H1 (cell line): ENCODE measurements at regions of chr5 and their contacts with region 1.

Region 1: GRCh38 chr5:149367249-149367971 is 9.6 kb downstream of the PCYOX1L start:
- DNase-seq: peak; percentile 62 to 89
- H3K4me3 ChIP-seq: no peak overlapping the region
- H3K27ac ChIP-seq: no peak overlapping the region
- H3K4me1 ChIP-seq: peaks cover 0 to 3% (median 1%) of the 10 kb centered on the region in 4 experiments; a peak in 3 of 7 replicates
- H3K27me3 ChIP-seq: no peaks in the 10 kb centered on the region
- CTCF ChIP-seq: peak; percentile 68 to 98 (median 97)
- EP300 ChIP-seq: no peak
- POLR2A ChIP-seq: no peak
- RAD21 ChIP-seq: peak; percentile 84 to 85

Region 2: DNA sequence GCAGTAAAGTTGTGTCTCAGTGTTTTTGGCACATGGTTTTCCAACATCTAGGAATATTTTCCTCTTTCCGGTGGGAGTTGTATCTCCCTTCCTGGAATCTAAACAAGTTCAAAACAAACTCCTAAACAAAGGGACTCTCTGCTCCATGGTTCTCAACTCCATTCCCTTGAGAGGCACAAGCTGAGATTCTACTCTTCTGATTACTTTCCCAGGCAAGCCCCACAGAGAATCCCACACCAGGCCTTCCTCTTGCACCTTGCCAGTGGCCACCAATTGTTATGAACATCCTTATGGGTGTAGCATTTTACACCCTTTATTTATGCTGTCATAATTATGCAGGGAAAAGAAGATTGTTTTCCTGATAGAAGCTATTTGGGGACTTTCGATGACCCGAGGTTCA is 278.7 kb before region 1 on chr5:
- CTCF ChIA-PET with region 1: no interaction called
- POLR2A ChIA-PET with region 1: no interaction called
- DNase-seq: no peak
- H3K4me3 ChIP-seq: no peak overlapping the region
- H3K27ac ChIP-seq: no peak overlapping the region
- H3K4me1 ChIP-seq: no peaks in the 10 kb centered on the region
- H3K27me3 ChIP-seq: no peaks in the 10 kb centered on the region
- CTCF ChIP-seq: no peak
- EP300 ChIP-seq: no peak
- POLR2A ChIP-seq: no peak
- RAD21 ChIP-seq: no peak

Region 3: GRCh38 chr5:149108651-149109280 is 258.6 kb before region 1 on chr5:
- CTCF ChIA-PET with region 1: no interaction called
- POLR2A ChIA-PET with region 1: no interaction called
- DNase-seq: no peak
- H3K4me3 ChIP-seq: no peak overlapping the region
- H3K27ac ChIP-seq: no peak overlapping the region
- H3K4me1 ChIP-seq: no peaks in the 10 kb centered on the region
- H3K27me3 ChIP-seq: no peaks in the 10 kb centered on the region
- CTCF ChIP-seq: no peak
- EP300 ChIP-seq: no peak
- POLR2A ChIP-seq: no peak
- RAD21 ChIP-seq: no peak

Region 4: DNA sequence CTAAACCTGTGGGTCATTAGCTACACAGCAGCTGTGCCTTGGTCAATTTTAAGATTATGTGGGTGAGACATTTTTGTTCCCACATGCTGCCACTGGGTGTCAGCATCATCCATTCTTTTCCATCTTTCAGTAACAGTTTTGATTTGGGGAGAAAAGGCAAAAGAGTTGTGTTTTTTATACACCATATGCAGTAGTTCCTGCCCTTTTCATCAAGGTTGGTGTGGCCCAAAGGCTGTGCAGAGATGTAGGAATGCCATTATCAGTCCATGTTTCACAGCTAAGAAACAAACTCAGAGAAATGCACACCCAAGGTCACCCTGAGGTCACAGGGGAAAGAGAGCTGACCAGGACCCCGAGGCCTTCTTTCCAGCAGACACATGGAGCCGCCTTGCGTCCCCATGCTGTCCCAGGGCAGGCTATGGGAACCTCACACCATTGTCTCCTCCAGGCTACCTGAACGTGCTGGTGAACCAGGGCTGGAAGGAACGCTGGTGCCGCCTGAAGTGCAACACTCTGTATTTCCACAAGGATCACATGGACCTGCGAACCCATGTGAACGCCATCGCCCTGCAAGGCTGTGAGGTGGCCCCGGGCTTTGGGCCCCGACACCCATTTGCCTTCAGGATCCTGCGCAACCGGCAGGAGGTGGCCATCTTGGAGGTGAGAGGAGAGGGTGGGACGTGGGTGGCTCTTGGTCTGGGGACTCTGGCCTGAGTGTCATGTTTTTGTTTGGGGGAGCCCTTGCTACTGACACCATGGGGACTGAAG is 49.9 kb before region 1 on chr5:
- CTCF ChIA-PET with region 1: interaction called, 43 read pairs
- POLR2A ChIA-PET with region 1: no interaction called
- DNase-seq: no peak
- H3K4me3 ChIP-seq: no peak overlapping the region
- H3K27ac ChIP-seq: no peak overlapping the region; the same call in 1 of the 2 replicates
- H3K4me1 ChIP-seq: peaks cover 0 to 4% (median 1%) of the 10 kb centered on the region in 4 experiments; a peak in 4 of 7 replicates
- H3K27me3 ChIP-seq: no peaks in the 10 kb centered on the region
- CTCF ChIP-seq: peak in 2 of 3 experiments; percentile 63 to 67; a peak in 3 of 4 replicates
- EP300 ChIP-seq: no peak
- POLR2A ChIP-seq: no peak
- RAD21 ChIP-seq: peak; percentile 68 to 75

Region 5: GRCh38 chr5:149345147-149345875 is 22.1 kb before region 1 on chr5 and contains the start of gene GRPEL2:
- CTCF ChIA-PET with region 1: interaction called, 26 read pairs
- POLR2A ChIA-PET with region 1: interaction called, 10 read pairs
- DNase-seq: peak; percentile 86 to 90
- H3K4me3 ChIP-seq: peak within 1 kb of the TSS; percentile 72 to 99 (median 93)
- H3K27ac ChIP-seq: peak within 1 kb of the TSS; percentile 86
- H3K4me1 ChIP-seq: peaks cover 0 to 5% (median 1%) of the 10 kb centered on the region in 4 experiments; a peak in 4 of 7 replicates
- H3K27me3 ChIP-seq: no peaks in the 10 kb centered on the region
- CTCF ChIP-seq: no peak
- EP300 ChIP-seq: peak in 1 of 2 experiments; percentile 5; a peak in 1 of 3 replicates
- POLR2A ChIP-seq: peak; percentile 86 to 88
- RAD21 ChIP-seq: no peak
- total RNA-seq, gene GRPEL2: 48.9 and 52.2 TPM in 2 replicates

Region 6: DNA sequence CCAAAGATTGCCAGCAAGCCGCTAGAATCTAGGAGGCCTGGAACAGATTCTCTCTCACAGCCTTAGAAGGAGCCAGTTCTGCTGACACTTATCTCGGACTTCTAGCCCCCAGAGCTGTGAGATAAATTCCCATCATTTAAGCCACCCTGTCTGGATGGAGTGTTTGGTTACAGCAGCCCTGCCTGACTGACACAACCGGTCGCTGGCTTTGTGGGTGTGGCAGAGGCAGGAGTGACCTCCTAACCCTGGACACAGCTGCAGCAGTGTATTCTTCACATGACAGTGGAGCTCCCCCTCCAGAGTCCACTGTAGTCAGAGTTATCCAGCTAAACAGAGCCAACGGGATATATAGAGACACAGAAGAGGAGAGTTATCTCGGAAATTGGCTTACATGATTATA is 32.9 kb after region 1 on chr5:
- CTCF ChIA-PET with region 1: interaction called, 16 read pairs
- POLR2A ChIA-PET with region 1: no interaction called
- DNase-seq: no peak
- H3K4me3 ChIP-seq: no peak overlapping the region
- H3K27ac ChIP-seq: no peak overlapping the region
- H3K4me1 ChIP-seq: no peaks in the 10 kb centered on the region; a peak in 1 of 7 replicates
- H3K27me3 ChIP-seq: no peaks in the 10 kb centered on the region; a peak in 1 of 7 replicates
- CTCF ChIP-seq: no peak
- EP300 ChIP-seq: no peak
- POLR2A ChIP-seq: no peak
- RAD21 ChIP-seq: no peak

Region 7: DNA sequence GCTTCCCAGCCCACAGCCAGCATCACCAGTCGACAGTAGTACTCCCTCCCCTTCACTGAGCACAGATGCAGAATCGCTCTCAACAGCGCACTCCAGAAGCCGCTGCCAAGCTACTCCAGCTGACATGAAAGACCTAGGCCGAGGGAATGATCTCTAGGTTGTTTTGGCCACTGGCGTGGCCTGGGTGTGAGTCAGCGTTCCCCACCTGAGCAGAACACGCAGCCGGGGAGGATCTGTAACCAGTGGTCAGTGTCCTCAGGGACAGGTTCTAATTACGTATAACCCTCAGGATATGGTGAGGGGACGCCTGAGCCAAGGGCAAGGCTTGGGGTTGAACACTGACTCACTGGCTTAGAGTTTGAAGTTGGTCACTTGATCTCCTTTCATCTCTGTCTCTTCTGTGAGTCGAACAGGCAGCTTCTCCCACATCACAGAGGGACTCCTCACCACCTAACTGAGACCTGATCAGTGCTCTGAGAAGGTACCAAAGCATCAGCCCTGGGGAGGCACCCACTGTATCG is 88.5 kb after region 1 on chr5:
- CTCF ChIA-PET with region 1: interaction called, 10 read pairs
- POLR2A ChIA-PET with region 1: no interaction called
- DNase-seq: no peak
- H3K4me3 ChIP-seq: no peak overlapping the region
- H3K27ac ChIP-seq: no peak overlapping the region
- H3K4me1 ChIP-seq: peaks cover 0 to 10% (median 3%) of the 10 kb centered on the region in 4 experiments; a peak in 4 of 7 replicates
- H3K27me3 ChIP-seq: no peaks in the 10 kb centered on the region
- CTCF ChIP-seq: no peak
- EP300 ChIP-seq: no peak
- POLR2A ChIP-seq: no peak
- RAD21 ChIP-seq: no peak